CD4-positive, alpha-beta T cell (primary cell): ENCODE measurements at regions of chr1 and their contacts with region 1.

Region 1: GRCh38 chr1:52927212-52928014 is at the start of gene SCP2:
- DNase-seq: peak; percentile 64 to 90 (median 79)
- ATAC-seq: peak; percentile 96
- H3K4me3 ChIP-seq: peak within 1 kb of the TSS; percentile 85
- H3K4me3 Mint-ChIP-seq: peak within 1 kb of the TSS; percentile 81
- H3K27ac ChIP-seq: no peak within 1 kb of the TSS
- H3K27ac Mint-ChIP-seq: peak within 1 kb of the TSS; percentile 38
- H3K4me1 ChIP-seq: peaks cover 23% of the 10 kb centered on the region
- H3K4me1 Mint-ChIP-seq: peaks cover 38% of the 10 kb centered on the region
- H3K27me3 ChIP-seq: no peaks in the 10 kb centered on the region
- H3K27me3 Mint-ChIP-seq: no peaks in the 10 kb centered on the region
- CTCF ChIP-seq: no peak
- total RNA-seq, gene SCP2: 22.7 to 27.0 TPM

Region 2: DNA sequence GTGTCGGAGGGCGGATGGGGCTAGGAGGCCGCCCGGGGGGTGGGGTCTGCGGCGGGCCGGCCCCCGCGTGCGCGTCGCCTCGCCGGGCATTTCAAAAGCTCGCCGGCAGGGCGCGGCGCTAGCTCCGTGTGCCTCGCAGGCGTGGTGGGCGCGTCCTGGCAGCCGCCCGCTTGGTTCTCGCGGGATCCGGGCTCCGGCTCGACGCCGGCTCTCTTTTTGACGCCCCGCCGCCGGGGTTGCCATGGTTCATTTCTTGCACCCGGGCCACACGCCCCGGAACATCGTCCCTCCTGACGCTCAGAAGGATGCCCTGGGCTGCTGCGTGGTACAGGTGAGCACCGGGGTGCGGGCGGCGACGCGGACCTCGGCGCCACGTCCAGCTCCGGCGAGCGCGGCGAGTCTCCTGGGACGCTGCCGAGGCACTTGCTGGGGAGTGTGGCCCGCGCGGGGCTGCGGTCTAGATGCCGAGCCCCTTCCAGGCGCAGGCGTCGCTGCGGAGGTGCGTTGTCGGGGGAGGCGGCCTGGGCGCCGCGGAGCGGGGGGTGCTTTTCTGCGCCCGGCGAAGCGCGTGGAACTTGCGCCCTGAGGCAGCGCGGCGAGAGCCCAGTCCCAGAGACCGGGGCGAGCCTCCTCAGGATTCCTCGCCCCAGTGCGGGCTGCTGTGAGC is 84.6 kb before region 1 on chr1 and contains the start of gene ZYG11A:
- CTCF ChIA-PET with region 1: no interaction called
- POLR2A ChIA-PET with region 1: no interaction called
- intact Hi-C with region 1: loop called in 1 of 2 experiments (anchors 10 kb)
- DNase-seq: peak; percentile 33 to 86 (median 63)
- ATAC-seq: peak; percentile 93
- H3K4me3 ChIP-seq: peak within 1 kb of the TSS; percentile 47
- H3K4me3 Mint-ChIP-seq: peak within 1 kb of the TSS; percentile 83
- H3K27ac ChIP-seq: no peak within 1 kb of the TSS
- H3K27ac Mint-ChIP-seq: no peak within 1 kb of the TSS
- H3K4me1 ChIP-seq: peaks cover 14% of the 10 kb centered on the region
- H3K4me1 Mint-ChIP-seq: peaks cover 7% of the 10 kb centered on the region
- H3K27me3 ChIP-seq: peaks cover 21 to 31% of the 10 kb centered on the region in 2 experiments
- H3K27me3 Mint-ChIP-seq: peaks cover 47% of the 10 kb centered on the region
- CTCF ChIP-seq: peak; percentile 51
- total RNA-seq, gene ZYG11A: 0.11 to 0.16 TPM